Breast epithelium (tissue), 4 donors: ENCODE measurements at regions of chr15 and their contacts with region 1.

Region 1: DNA sequence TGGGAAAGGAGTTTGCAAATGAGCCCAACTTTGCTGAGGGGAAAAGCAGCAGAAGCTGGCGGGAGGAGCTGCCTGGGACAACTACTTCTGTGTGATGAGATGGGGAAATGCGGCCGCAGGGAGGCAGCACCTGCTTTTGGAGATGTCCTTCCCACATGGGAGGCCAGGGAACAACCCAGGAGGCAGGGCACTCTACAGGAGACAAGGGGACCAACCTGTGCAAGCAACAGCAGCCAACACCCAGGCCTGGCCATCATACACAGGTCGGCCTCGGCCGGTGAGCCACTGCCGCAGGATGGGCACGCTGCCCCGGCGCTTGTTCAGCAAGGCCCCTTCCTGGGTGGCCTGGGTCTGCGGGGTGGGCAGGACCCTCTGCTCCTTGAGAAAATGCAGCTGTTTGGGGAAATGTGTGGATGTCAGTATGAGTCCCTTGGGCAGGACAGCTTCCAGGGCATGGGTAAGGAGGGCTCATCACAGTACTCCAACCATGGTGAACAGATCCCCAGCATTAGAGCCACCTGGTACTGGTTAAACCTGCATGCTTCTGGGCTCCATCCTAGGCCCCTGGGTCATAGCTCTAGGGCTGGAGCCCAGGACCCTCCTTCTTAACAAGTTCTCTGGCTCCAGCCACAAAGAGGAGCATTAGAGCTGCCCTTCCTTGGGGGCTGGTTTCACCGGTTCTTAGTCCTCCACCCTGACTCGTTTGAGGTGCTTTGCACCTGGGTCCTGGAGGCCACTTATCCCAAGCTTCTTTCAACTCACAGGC is 11.6 kb downstream of the EPB42 start:
- DNase-seq: no peak
- H3K4me3 ChIP-seq: no peak overlapping the region
- H3K27ac ChIP-seq: no peak overlapping the region
- H3K4me1 ChIP-seq: no peaks in the 10 kb centered on the region
- H3K27me3 ChIP-seq: no peaks in the 10 kb centered on the region
- CTCF ChIP-seq: no peak
- POLR2A ChIP-seq: no peak

Region 2: DNA sequence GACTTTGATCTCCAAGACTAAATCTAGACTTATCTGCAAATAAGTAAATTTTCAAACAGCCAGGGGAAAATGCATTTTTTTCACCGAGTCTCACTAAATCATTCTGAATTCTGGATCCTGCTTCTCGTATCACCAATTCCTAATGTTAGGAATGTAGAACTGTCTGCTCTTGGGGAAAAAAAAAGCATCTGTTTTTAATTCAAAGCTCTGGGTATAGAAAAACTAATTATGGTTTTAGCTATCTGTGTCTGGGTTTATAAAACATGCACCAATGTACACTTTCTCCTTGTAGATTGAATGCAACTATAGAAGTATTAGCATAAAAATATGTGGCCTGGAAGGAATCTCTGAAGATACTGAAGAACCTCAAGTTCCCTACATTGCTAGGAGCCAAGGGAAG is 467.5 kb before region 1 on chr15:
- intact Hi-C with region 1: loop called (anchors 5 kb)
- DNase-seq: no peak
- H3K4me3 ChIP-seq: no peak overlapping the region
- H3K27ac ChIP-seq: no peak overlapping the region
- H3K4me1 ChIP-seq: no peaks in the 10 kb centered on the region
- H3K27me3 ChIP-seq: no peaks in the 10 kb centered on the region
- CTCF ChIP-seq: no peak
- POLR2A ChIP-seq: no peak

Region 3: GRCh38 chr15:43168192-43169107 is 40.8 kb before region 1 on chr15:
- intact Hi-C with region 1: no loop called
- DNase-seq: peak in 1 of 2 donors; percentile 87
- H3K4me3 ChIP-seq: no peak overlapping the region
- H3K27ac ChIP-seq: peak overlapping the region; percentile 85 to 87
- H3K4me1 ChIP-seq: peaks cover 0 to 11% of the 10 kb centered on the region in 2 donors
- H3K27me3 ChIP-seq: no peaks in the 10 kb centered on the region
- CTCF ChIP-seq: peak in 2 of 3 donors; percentile 9 to 39
- POLR2A ChIP-seq: no peak

Region 4: DNA sequence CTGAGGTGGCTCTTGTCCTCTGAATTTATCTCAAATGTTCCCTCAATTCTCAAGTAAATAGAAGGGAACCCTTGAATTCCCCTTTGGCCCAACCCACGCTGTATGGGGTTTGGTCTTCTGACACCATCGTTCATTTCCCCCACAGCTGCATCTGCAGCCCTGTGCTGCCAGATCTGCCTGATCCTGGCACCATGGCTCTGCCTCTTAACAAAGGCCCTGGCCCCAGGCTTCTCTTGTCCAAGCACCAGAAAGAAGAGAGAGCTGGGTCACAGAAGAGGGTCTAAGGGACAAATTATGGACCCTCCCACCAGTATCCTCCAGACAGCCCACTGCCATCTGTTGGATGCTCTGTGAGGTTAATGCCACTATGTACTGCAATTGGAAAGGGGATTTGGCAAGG is 310.0 kb after region 1 on chr15:
- intact Hi-C with region 1: no loop called
- DNase-seq: no peak
- H3K4me3 ChIP-seq: peak overlapping the region in 1 of 3 donors; percentile 69
- H3K27ac ChIP-seq: peak overlapping the region in 1 of 2 donors; percentile 90
- H3K4me1 ChIP-seq: no peaks in the 10 kb centered on the region
- H3K27me3 ChIP-seq: no peaks in the 10 kb centered on the region
- CTCF ChIP-seq: no peak
- POLR2A ChIP-seq: no peak